OCI-LY7 (cell line): ENCODE measurements at regions of chr14 and their contacts with region 1.

Region 1: DNA sequence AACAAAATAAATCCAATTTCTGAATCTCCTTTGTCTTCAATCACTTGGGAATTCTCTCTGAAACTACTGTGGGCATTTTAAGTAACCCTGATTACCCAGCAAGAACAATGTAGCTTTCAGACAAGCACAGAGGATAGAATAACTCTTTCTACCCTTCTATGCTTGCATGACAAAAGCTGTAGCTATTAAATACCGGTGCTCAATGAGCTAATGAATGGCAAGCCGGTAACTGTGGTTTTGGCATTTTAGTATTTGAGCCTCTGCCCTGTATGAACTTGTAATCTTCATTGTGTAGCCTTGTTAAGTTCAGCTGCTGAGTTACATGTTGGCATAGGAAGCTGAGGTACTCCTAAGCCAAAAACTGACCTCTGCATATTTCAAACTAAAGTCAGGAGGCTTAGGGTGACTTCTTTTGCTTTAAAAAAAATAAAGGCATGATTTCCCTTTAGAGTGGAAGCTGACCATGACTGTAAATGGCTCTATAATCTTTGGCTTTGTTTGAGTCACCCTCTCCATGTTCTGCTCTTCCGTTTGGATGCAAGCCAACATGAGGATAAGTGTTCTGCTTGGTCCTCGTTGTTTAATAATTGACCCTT is 171.0 kb upstream of the HIF1A start:
- DNase-seq: no peak
- H3K4me3 ChIP-seq: no peak overlapping the region
- H3K27ac ChIP-seq: no peak overlapping the region
- H3K4me1 ChIP-seq: peaks cover 4% of the 10 kb centered on the region
- CTCF ChIP-seq: no peak

Region 2: DNA sequence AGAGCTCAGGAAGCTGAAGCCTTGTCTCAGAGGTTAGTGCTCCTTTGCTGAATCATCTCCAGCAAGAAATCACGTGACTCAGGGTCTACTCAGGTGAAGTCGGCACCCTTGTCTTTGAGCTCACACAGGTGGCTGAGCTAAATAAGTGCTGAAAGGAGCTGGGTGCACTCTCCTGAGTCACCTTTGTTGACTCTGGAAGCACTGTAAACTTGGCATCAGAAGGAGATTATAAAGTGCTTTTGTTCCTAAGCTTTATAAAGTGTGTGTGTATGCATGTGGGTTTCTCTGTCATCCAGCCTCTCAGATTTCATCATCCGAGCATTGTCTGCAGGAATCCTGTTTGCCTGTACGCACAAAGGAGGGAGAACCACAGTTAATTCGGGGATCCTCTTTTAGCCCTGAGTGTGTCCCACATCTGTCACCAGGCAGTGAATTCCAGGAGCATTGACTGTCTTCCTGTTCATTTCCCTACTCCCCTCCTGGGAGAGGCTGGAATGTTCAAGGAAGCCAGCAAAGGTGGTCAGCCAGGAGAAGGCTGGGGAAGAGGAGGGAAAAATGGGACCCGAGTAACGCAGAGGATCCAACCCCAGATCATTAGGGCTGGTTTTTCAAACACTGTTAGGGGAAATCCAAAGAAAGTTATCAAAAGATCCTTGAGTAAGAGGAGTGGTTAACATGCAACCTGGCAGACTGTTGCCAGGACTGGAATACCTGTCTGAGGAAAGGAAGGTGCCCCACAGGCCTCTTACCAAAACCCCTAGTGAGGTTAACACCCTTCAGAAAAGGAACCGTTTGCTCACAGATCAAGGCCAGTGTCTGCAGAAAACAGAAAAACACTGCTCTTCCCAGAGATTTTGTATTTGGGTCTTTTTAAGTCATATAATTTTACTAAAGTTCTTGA is 13.5 kb after region 1 on chr14:
- CTCF ChIA-PET with region 1: no interaction called
- POLR2A ChIA-PET with region 1: interaction called, 13 read pairs
- intact Hi-C with region 1: no loop called
- DNase-seq: peak; percentile 37
- H3K4me3 ChIP-seq: no peak overlapping the region
- H3K27ac ChIP-seq: no peak overlapping the region
- H3K4me1 ChIP-seq: peaks cover 13% of the 10 kb centered on the region
- CTCF ChIP-seq: no peak